ENCODE measurements at regions of chr20 and their contacts with region 1.

Region 1: GRCh38 chr20:44678242-44678641 is 26.7 kb upstream of the ADA start:
- DNase-seq: peak; percentile 83 to 92
- H3K4me3 ChIP-seq: no peak overlapping the region
- H3K4me3 Mint-ChIP-seq: peak overlapping the region; percentile 1
- H3K27ac Mint-ChIP-seq: peak overlapping the region; percentile 63
- H3K4me1 ChIP-seq: peaks cover 28% of the 10 kb centered on the region
- H3K4me1 Mint-ChIP-seq: peaks cover 10% of the 10 kb centered on the region
- H3K27me3 ChIP-seq: no peaks in the 10 kb centered on the region
- H3K27me3 Mint-ChIP-seq: no peaks in the 10 kb centered on the region
- CTCF ChIP-seq: no peak

Region 2: GRCh38 chr20:44651684-44652423 is 26.4 kb before region 1 on chr20 and contains the start of gene ADA:
- CTCF ChIA-PET with region 1: interaction called, 26 read pairs
- POLR2A ChIA-PET with region 1: no interaction called
- intact Hi-C with region 1: loop called (anchors 1 kb)
- DNase-seq: peak; percentile 78 to 90
- H3K4me3 ChIP-seq: peak within 1 kb of the TSS; percentile 64
- H3K4me3 Mint-ChIP-seq: peak within 1 kb of the TSS; percentile 69
- H3K27ac Mint-ChIP-seq: no peak within 1 kb of the TSS
- H3K4me1 ChIP-seq: peaks cover 8% of the 10 kb centered on the region
- H3K4me1 Mint-ChIP-seq: peaks cover 12% of the 10 kb centered on the region
- H3K27me3 ChIP-seq: no peaks in the 10 kb centered on the region
- H3K27me3 Mint-ChIP-seq: peaks cover 16% of the 10 kb centered on the region
- CTCF ChIP-seq: peak in 1 of 2 experiments; percentile 14
- total RNA-seq, gene ADA: 21.1 and 23.5 TPM in 2 replicates